ENCODE measurements at regions of chr13 and their contacts with region 1.

Region 1: GRCh38 chr13:28636674-28637317 is 22.1 kb upstream of the POMP start:
- DNase-seq: peak in 28 of 35 experiments; percentile 6 to 72 (median 20)
- ATAC-seq: peak; percentile 70 to 90 (median 78)
- H3K4me3 ChIP-seq: no peak overlapping the region
- H3K4me3 Mint-ChIP-seq: peak overlapping the region in 1 of 3 donors; percentile 7
- H3K27ac ChIP-seq: no peak overlapping the region
- H3K27ac Mint-ChIP-seq: peak overlapping the region in 1 of 2 donors; percentile 52
- H3K4me1 ChIP-seq: peaks cover 0 to 2% of the 10 kb centered on the region in 2 experiments
- H3K4me1 Mint-ChIP-seq: peaks cover 7 to 9% (median 8%) of the 10 kb centered on the region in 3 donors
- H3K27me3 ChIP-seq: peaks cover 0 to 5% of the 10 kb centered on the region in 2 experiments
- H3K27me3 Mint-ChIP-seq: peaks cover 12 to 23% of the 10 kb centered on the region in 2 donors

Region 2: GRCh38 chr13:28658796-28659620 is 22.2 kb after region 1 on chr13 and contains the start of gene POMP:
- CTCF ChIA-PET with region 1: interaction called, 3 to 10 read pairs
- POLR2A ChIA-PET with region 1: interaction called in 1 of 2 experiments, 3 read pairs
- DNase-seq: peak; percentile 83 to 96 (median 92)
- ATAC-seq: peak; percentile 89 to 96 (median 94)
- H3K4me3 ChIP-seq: peak within 1 kb of the TSS; percentile 85 to 87
- H3K4me3 Mint-ChIP-seq: peak within 1 kb of the TSS; percentile 96 to 98 (median 97)
- H3K27ac ChIP-seq: peak within 1 kb of the TSS; percentile 86
- H3K27ac Mint-ChIP-seq: peak within 1 kb of the TSS; percentile 95 to 97
- H3K4me1 ChIP-seq: peaks cover 24% of the 10 kb centered on the region in 2 experiments
- H3K4me1 Mint-ChIP-seq: peaks cover 56 to 70% (median 59%) of the 10 kb centered on the region in 3 donors
- H3K27me3 ChIP-seq: no peaks in the 10 kb centered on the region
- H3K27me3 Mint-ChIP-seq: no peaks in the 10 kb centered on the region
- total RNA-seq, gene POMP: 21.4 to 24.7 (median 23.3) TPM